ENCODE measurements at regions of chr12 and their contacts with region 1.

Region 1: DNA sequence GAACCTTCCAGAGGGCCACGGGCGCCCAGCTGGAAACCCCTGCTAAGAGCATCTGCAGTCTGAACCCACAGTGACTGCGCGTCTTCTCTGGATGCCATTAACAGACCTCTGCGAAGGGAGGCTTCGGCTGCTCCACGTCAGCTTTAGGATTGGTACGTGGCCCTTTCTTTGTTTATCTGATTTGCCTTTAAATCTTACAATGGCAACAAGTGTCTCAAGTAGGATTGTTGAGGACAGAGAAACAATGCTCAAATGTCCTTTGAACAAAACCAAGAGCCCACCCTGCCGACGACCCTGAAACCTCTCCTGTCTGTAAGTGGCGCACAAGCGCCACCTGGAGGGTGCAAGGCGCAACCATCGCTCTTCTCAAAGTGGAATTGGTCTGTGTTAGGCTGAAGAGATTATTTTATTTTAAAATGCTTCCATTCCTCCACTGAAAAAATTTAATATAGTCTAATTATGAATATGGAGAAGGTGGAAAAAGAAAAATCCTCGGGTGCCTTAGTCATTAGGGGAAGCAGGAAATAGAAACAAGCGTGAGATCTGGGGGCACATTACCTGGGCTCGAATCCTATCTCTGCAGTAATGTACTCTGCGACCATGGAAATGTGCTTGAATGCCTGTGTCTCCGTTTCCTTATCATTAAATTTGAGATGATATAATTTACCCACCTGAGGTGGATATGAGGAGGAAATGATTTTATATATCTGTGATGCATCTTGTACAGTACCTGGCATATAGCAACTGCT is 82.6 kb upstream of the PTPRB start:
- DNase-seq: peak; percentile 42 to 54
- ATAC-seq: peak; percentile 60 to 87 (median 71)
- H3K4me3 ChIP-seq: peak overlapping the region in 8 of 10 donors; percentile 11 to 48 (median 42)
- H3K27ac ChIP-seq: peak overlapping the region in 9 of 10 donors; percentile 19 to 77 (median 62)
- H3K4me1 ChIP-seq: peaks cover 0 to 58% (median 23%) of the 10 kb centered on the region in 9 donors
- H3K27me3 ChIP-seq: peaks cover 0 to 5% (median 0%) of the 10 kb centered on the region in 7 donors
- CTCF ChIP-seq: peak; percentile 76 to 97 (median 95)

Region 2: GRCh38 chr12:69900720-69901131 is 819.1 kb before region 1 on chr12:
- intact Hi-C with region 1: loop called in 1 of 10 experiments (anchors 10 kb)
- DNase-seq: peak in 1 of 2 donors; percentile 85
- ATAC-seq: peak in 7 of 8 donors; percentile 35 to 79 (median 59)
- H3K4me3 ChIP-seq: no peak overlapping the region
- H3K27ac ChIP-seq: peak overlapping the region in 1 of 10 donors; percentile 9
- H3K4me1 ChIP-seq: peaks cover 0 to 23% (median 13%) of the 10 kb centered on the region in 9 donors
- H3K27me3 ChIP-seq: no peaks in the 10 kb centered on the region
- CTCF ChIP-seq: peak; percentile 79 to 92 (median 86)

Region 3: GRCh38 chr12:70365648-70366518 is 354.0 kb before region 1 on chr12 and contains the start of gene KCNMB4:
- intact Hi-C with region 1: loop called in 1 of 10 experiments (anchors 10 kb)
- DNase-seq: peak; percentile 52 to 69
- ATAC-seq: peak; percentile 83 to 96 (median 92)
- H3K4me3 ChIP-seq: peak within 1 kb of the TSS; percentile 56 to 89 (median 68)
- H3K27ac ChIP-seq: peak within 1 kb of the TSS in 9 of 10 donors; percentile 8 to 60 (median 36)
- H3K4me1 ChIP-seq: peaks cover 7 to 39% (median 20%) of the 10 kb centered on the region in 9 donors
- H3K27me3 ChIP-seq: peaks cover 0 to 65% (median 0%) of the 10 kb centered on the region in 7 donors
- CTCF ChIP-seq: no peak
- total RNA-seq, gene KCNMB4: 1.2 to 3.8 (median 1.6) TPM

Region 4: DNA sequence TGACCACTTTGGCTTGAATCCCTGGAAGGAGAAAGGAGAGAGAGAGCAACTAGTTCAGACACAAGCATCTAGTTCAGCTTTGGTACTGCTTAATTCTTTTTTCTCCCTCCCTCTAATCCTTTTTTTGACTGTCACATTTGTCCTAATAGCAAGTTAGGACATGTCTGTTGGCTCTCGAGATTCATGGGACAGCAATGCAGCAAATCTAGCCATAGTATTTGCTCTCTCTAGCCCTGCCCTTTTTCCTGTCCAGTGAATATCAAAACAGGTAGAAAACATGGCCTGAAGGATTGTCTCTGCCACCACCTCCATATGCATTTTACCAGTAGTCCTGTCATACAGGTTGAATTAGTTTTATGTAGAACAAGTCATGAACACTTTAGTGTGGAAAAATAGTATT is 199.0 kb before region 1 on chr12:
- intact Hi-C with region 1: no loop called
- DNase-seq: no peak
- ATAC-seq: no peak
- H3K4me3 ChIP-seq: no peak overlapping the region
- H3K27ac ChIP-seq: no peak overlapping the region
- H3K4me1 ChIP-seq: no peaks in the 10 kb centered on the region
- H3K27me3 ChIP-seq: no peaks in the 10 kb centered on the region
- CTCF ChIP-seq: no peak

Region 5: GRCh38 chr12:70590051-70590450 is 129.8 kb before region 1 on chr12:
- intact Hi-C with region 1: loop called (anchors 1 to 10 kb)
- DNase-seq: peak; percentile 70 to 74
- ATAC-seq: peak in 6 of 8 donors; percentile 85 to 92 (median 88)
- H3K4me3 ChIP-seq: no peak overlapping the region
- H3K27ac ChIP-seq: no peak overlapping the region
- H3K4me1 ChIP-seq: peaks cover 0 to 42% (median 0%) of the 10 kb centered on the region in 9 donors
- H3K27me3 ChIP-seq: no peaks in the 10 kb centered on the region
- CTCF ChIP-seq: peak; percentile 65 to 93 (median 88)